AG04450 (cell line): ENCODE measurements at regions of chr5 and their contacts with region 1.

Region 1: GRCh38 chr5:132086277-132086794 is 12.7 kb downstream of the CSF2 start:
- DNase-seq: peak; percentile 83
- H3K4me3 ChIP-seq: no peak overlapping the region
- H3K27ac ChIP-seq: peak overlapping the region; percentile 42
- H3K27me3 ChIP-seq: no peaks in the 10 kb centered on the region
- CTCF ChIP-seq: no peak

Region 2: GRCh38 chr5:131720714-131721113 is 365.6 kb before region 1 on chr5:
- CTCF ChIA-PET with region 1: no interaction called
- POLR2A ChIA-PET with region 1: no interaction called
- DNase-seq: no peak
- H3K4me3 ChIP-seq: no peak overlapping the region
- H3K27ac ChIP-seq: no peak overlapping the region
- H3K27me3 ChIP-seq: no peaks in the 10 kb centered on the region
- CTCF ChIP-seq: no peak

Region 3: GRCh38 chr5:132064738-132065331 is 21.5 kb before region 1 on chr5:
- CTCF ChIA-PET with region 1: interaction called, 31 read pairs
- POLR2A ChIA-PET with region 1: no interaction called
- DNase-seq: peak; percentile 43
- H3K4me3 ChIP-seq: no peak overlapping the region
- H3K27ac ChIP-seq: no peak overlapping the region
- H3K27me3 ChIP-seq: peaks cover 4% of the 10 kb centered on the region
- CTCF ChIP-seq: peak; percentile 93